Activated CD4-positive, alpha-beta T cell treated with anti-CD3 and anti-CD28 coated beads for 36 hours (primary cell): ENCODE measurements at regions of chr2 and their contacts with region 1.

Region 1: DNA sequence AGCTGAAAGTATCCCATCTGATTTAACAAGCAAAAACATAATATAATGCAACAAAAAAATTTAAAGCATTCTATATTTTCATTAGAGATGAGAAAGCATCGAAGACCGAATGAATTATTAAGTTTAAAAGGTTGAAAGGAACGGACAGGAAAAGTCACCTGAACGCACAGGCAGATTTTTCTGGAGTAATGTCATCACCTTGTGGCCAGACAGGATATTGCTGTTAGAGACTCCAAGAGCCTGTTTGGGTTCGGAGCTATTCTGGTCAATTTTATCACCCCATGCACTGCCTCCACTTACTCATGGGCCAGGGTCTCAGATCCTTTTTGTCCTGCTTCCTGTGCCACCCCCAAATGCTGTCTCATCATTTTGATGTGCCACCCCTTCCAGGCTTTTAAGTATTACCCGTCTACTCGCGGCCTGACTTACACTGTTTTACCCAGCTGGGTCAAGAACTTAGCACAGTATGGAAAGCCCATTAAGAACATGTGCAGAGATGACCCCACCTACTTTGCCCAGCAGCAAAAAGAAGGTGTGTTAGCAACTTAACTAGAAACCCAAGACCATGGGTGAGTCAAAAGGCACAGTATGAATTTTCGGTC is 27.3 kb downstream of the GKN2 start:
- DNase-seq: peak; percentile 63
- ATAC-seq: peak; percentile 75
- H3K4me3 Mint-ChIP-seq: no peak overlapping the region
- H3K27ac Mint-ChIP-seq: no peak overlapping the region
- H3K4me1 Mint-ChIP-seq: peaks cover 4% of the 10 kb centered on the region
- H3K27me3 Mint-ChIP-seq: peaks cover 2% of the 10 kb centered on the region

Region 2: GRCh38 chr2:68594674-68595492 is 330.5 kb before region 1 on chr2:
- CTCF ChIA-PET with region 1: interaction called, 16 read pairs
- POLR2A ChIA-PET with region 1: no interaction called
- intact Hi-C with region 1: no loop called
- DNase-seq: peak; percentile 72
- ATAC-seq: peak; percentile 49
- H3K4me3 Mint-ChIP-seq: no peak overlapping the region
- H3K27ac Mint-ChIP-seq: no peak overlapping the region
- H3K4me1 Mint-ChIP-seq: peaks cover 6% of the 10 kb centered on the region
- H3K27me3 Mint-ChIP-seq: peaks cover 9% of the 10 kb centered on the region

Region 3: DNA sequence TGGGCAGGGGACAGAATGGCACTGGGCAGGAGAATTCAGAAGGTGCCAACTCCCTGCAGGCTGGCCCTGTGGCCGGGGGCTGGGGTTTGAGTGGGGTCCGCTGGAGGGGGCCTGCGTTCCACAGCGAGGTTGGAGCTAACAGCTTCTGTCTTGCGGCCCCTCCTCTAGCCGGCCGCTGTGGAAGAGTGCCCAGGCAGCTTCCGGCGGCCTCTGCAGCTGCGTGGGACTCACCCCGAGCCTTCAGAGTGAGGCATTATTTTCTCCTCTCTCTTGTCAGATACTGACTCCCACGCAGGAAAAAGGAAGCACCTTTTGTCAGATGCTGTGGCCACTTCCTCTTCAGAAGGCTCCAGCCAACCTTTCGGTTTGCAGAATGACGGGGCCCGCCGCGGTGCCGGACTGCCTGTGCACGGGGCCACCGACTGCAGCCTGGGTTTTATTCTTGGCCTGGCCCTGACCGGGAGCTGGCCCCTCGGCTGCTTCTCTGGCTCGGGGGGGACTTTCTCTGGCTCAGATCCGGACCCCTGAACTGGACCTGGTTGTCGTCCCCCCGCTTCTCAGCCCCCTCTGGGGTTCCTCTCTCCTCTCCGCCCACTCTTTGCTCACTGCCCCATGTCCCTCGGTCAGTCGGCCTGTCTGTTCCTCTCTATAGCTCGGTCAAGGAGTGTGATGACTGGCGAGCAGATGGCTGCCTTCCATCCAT is 150.7 kb before region 1 on chr2:
- CTCF ChIA-PET with region 1: interaction called, 11 read pairs
- POLR2A ChIA-PET with region 1: no interaction called
- intact Hi-C with region 1: no loop called
- DNase-seq: peak; percentile 79
- ATAC-seq: peak; percentile 68
- H3K4me3 Mint-ChIP-seq: peak overlapping the region; percentile 71
- H3K27ac Mint-ChIP-seq: peak overlapping the region; percentile 99
- H3K4me1 Mint-ChIP-seq: peaks cover 84% of the 10 kb centered on the region
- H3K27me3 Mint-ChIP-seq: no peaks in the 10 kb centered on the region

Region 4: DNA sequence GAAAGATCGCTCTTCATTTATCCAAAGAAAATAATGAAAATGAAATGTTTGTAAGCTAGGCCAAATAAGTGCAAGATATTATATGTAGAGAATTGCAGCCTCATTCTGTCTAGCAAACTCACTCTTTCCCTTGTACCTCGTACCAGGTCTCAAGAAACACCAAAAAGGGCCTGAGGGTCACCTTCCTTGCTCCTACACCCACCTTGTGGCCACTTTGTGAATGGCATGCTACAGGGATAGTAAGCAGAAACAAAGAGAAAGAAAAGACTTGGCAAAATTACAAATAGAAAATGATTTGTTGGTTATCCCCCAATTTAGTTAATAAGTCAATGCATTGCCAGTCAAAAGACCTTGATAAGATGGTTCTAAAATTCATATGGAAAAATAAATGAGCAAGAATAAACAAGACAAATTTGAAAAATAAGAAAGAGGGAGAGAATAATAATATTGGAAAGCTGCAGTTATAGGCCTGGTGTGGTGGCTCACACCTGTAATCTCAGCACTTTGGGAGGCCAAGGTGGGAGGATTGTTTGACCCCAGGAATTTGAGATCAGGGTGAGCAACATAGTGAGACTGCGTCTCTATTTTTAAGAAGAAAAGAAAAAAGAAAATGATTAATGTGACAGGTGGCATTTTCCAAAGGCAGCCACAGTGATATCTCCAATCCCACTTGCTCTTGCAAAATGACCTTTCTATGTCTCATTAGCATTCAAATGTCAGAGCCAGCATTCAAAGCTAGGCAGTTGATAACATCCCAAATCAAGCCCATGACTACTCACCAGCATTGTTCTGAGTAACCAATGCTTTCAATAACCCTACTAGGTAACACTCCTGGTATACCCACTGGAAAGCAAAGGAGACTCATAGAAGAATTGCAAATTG is 15.4 kb before region 1 on chr2:
- CTCF ChIA-PET with region 1: interaction called, 33 read pairs
- POLR2A ChIA-PET with region 1: interaction called, 3 read pairs
- intact Hi-C with region 1: no loop called
- DNase-seq: peak; percentile 88
- ATAC-seq: peak; percentile 20
- H3K4me3 Mint-ChIP-seq: no peak overlapping the region
- H3K27ac Mint-ChIP-seq: peak overlapping the region; percentile 69
- H3K4me1 Mint-ChIP-seq: peaks cover 36% of the 10 kb centered on the region
- H3K27me3 Mint-ChIP-seq: no peaks in the 10 kb centered on the region

Region 5: GRCh38 chr2:68943581-68944568 is 18.5 kb after region 1 on chr2:
- CTCF ChIA-PET with region 1: interaction called, 32 read pairs
- POLR2A ChIA-PET with region 1: no interaction called
- intact Hi-C with region 1: no loop called
- DNase-seq: peak; percentile 64
- ATAC-seq: peak; percentile 71
- H3K4me3 Mint-ChIP-seq: no peak overlapping the region
- H3K27ac Mint-ChIP-seq: no peak overlapping the region
- H3K4me1 Mint-ChIP-seq: peaks cover 6% of the 10 kb centered on the region
- H3K27me3 Mint-ChIP-seq: peaks cover 23% of the 10 kb centered on the region